ENCODE measurements at regions of chr7 and their contacts with region 1.

Region 1: GRCh38 chr7:17298207-17298839 is at the start of gene AHR:
- DNase-seq: peak; percentile 67
- H3K4me3 Mint-ChIP-seq: peak within 1 kb of the TSS; percentile 96
- H3K27ac Mint-ChIP-seq: peak within 1 kb of the TSS; percentile 95
- H3K4me1 Mint-ChIP-seq: peaks cover 23% of the 10 kb centered on the region
- H3K27me3 Mint-ChIP-seq: peaks cover 2% of the 10 kb centered on the region
- total RNA-seq, gene AHR: 34.3 and 37.2 TPM in 2 replicates

Region 2: GRCh38 chr7:16645593-16646471 is 652.5 kb before region 1 on chr7 and contains the starts of genes ANKMY2 and BZW2:
- intact Hi-C with region 1: loop called (anchors 5 kb)
- DNase-seq: peak; percentile 93
- H3K4me3 Mint-ChIP-seq: peak within 1 kb of the TSS; percentile 97
- H3K27ac Mint-ChIP-seq: peak within 1 kb of the TSS; percentile 97
- H3K4me1 Mint-ChIP-seq: peaks cover 51% of the 10 kb centered on the region
- H3K27me3 Mint-ChIP-seq: no peaks in the 10 kb centered on the region
- total RNA-seq, gene ANKMY2: 8.7 TPM in 2 replicates
- total RNA-seq, gene BZW2: 82.9 and 90.2 TPM in 2 replicates

Region 3: DNA sequence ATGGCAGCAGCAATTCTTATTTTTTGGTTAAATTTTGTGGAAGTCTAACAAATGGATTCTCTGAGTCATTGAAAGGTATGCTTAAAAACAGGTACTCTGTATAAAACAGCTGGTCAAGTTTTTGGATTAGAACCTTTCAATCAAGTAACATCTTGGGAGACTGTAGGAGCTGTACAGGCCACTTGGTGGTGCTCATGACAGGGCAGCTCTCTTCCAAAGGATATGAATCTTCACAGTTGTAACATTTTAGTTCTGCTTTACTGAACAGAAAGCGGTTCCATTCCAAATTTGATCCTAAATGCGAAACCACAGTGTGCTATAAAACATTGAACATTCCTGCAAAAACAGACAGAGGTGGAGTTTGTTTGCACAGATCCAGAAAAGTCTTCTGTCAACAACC is 372.0 kb before region 1 on chr7:
- intact Hi-C with region 1: loop called (anchors 1 kb)
- DNase-seq: no peak
- H3K4me3 Mint-ChIP-seq: no peak overlapping the region
- H3K27ac Mint-ChIP-seq: peak overlapping the region; percentile 43
- H3K4me1 Mint-ChIP-seq: peaks cover 62% of the 10 kb centered on the region
- H3K27me3 Mint-ChIP-seq: no peaks in the 10 kb centered on the region

Region 4: DNA sequence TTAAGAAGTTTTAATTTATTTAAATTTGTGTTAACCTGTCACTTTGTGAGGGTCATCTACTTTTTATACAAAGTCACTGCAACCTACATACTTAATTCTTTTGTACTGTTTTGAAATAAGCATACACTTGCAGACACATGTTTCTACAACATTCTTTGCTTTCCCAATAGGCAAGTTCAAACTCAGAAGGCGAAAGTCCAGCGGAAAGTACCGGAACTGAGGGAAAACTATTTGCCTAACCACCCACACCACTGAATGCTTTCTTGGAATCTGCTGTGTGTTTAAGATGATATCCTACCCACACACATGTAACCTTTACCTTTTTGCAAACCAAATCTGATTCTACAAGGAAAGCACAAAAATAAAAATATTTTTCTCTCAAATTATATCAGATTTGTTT is 277.1 kb before region 1 on chr7:
- intact Hi-C with region 1: loop called (anchors 2 kb)
- DNase-seq: no peak
- H3K4me3 Mint-ChIP-seq: no peak overlapping the region
- H3K27ac Mint-ChIP-seq: no peak overlapping the region
- H3K4me1 Mint-ChIP-seq: peaks cover 21% of the 10 kb centered on the region
- H3K27me3 Mint-ChIP-seq: peaks cover 3% of the 10 kb centered on the region

Region 5: DNA sequence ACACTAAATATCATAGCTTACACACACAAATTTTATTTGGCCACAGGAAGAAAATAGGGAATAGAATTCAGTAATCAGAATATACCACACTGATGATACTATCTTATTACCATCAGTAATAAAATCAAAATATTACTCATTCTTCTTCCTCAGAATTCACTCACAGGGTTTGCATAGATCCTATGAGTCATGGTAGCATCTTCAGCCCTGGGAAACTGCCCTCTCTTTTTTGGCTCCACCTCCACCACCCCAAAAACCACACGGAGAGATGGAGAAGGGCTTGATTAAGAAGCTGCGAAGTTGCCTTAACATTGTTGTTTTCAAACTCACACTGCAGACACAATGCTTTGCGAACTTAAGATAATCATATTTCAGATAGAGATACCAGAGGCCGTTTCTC is 154.0 kb before region 1 on chr7:
- intact Hi-C with region 1: loop called (anchors 2 kb)
- DNase-seq: peak; percentile 70
- H3K4me3 Mint-ChIP-seq: peak overlapping the region; percentile 16
- H3K27ac Mint-ChIP-seq: peak overlapping the region; percentile 71
- H3K4me1 Mint-ChIP-seq: peaks cover 63% of the 10 kb centered on the region
- H3K27me3 Mint-ChIP-seq: no peaks in the 10 kb centered on the region

Region 6: GRCh38 chr7:17239683-17240521 is 58.4 kb before region 1 on chr7:
- intact Hi-C with region 1: no loop called
- DNase-seq: no peak
- H3K4me3 Mint-ChIP-seq: no peak overlapping the region
- H3K27ac Mint-ChIP-seq: no peak overlapping the region
- H3K4me1 Mint-ChIP-seq: peaks cover 23% of the 10 kb centered on the region
- H3K27me3 Mint-ChIP-seq: peaks cover 3% of the 10 kb centered on the region

Region 7: DNA sequence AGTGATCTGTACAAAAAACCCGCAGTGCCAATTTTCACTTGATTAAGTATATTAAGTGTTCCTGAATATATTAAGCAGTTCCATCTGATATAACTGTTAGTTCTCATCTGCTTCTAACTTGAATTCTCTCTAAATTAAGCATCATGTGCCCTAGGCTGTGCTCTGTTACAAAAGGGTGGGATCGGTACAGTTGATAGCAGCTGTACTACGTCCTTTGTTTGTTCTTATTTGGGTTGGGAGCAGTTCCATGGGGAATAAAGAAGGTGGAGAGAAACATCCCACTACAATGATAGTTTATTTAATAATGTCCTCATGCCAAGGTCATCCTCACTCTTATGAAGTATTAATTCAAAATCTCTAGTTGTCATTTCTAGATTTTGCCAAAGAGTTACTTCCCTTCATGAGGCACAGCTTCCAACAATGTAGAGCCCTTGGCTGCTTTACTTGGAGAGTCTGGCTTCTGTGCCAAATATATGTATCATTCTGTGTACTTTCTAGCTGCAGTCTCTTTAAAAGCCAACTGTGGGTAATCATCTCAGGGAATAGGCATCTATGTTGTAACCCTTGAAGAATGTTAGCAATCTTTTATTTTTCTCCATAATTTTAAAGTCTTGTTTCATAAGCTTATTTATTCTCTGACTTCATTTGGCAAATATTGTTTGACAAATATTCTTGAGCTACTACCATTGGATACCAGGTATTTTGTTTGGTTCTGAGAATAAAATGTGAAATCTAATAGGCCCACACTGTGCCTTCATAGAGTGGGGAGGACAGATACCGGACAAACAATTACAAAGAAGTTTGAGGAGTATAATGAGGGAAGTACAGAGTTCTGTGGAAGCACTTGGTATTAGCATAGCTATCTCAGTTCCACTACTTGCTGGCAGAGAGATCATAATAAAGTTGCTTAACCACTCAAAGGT is 22.3 kb before region 1 on chr7:
- intact Hi-C with region 1: loop called (anchors 2 kb)
- DNase-seq: no peak
- H3K4me3 Mint-ChIP-seq: no peak overlapping the region
- H3K27ac Mint-ChIP-seq: no peak overlapping the region
- H3K4me1 Mint-ChIP-seq: peaks cover 13% of the 10 kb centered on the region
- H3K27me3 Mint-ChIP-seq: peaks cover 3% of the 10 kb centered on the region

Region 8: DNA sequence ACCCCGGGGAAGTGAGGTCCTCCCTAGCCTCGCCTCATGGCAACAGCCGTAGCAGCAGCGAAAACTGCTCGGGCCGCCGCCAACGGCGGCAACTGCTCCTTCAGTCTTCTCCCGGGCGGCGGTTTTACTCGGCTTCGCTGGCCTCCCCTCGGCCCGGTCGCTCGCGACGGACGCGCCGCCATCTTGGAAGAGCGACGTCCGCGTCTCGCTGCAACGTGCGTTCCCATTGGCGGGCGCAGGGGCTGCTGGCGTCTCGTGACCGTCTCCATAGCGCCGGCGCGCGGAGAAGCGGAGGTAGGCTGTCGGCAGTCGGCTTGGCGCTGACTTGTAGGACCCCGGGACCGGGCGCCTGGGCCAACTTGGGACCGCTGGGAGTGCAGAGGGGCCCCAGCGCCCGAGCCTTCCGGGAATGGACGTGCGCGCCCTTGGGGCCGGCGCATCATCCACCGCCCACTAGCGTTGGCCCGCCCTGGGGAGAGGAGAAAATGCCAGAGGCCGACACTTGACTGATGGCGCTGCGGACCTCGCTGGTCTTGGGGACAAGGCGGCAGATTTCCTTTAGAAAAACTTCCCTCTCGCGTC is 642.1 kb after region 1 on chr7 and contains the start of gene SNX13:
- intact Hi-C with region 1: loop called (anchors 10 kb)
- DNase-seq: peak; percentile 84
- H3K4me3 Mint-ChIP-seq: peak within 1 kb of the TSS; percentile 97
- H3K27ac Mint-ChIP-seq: peak within 1 kb of the TSS; percentile 94
- H3K4me1 Mint-ChIP-seq: peaks cover 36% of the 10 kb centered on the region
- H3K27me3 Mint-ChIP-seq: peaks cover 10% of the 10 kb centered on the region
- total RNA-seq, gene SNX13: 21.2 and 21.9 TPM in 2 replicates

Measured in activated T-helper 2 cell treated with anti-CD3 and anti-CD28 coated beads, Interferon-gamma antibody, Interleukin-2, Interleukin-4, amounts not matched to agents 10 μg/mL and 5 μg/mL and 100 μg/mL, durations not matched to agents 14 hours and 24 hours and 36 hours (primary cell).